AG04450 (cell line): ENCODE measurements at regions of chr3 and their contacts with region 1.

Region 1: GRCh38 chr3:179732661-179733348 is 80.0 kb downstream of the USP13 start:
- DNase-seq: no peak
- H3K4me3 ChIP-seq: no peak overlapping the region
- H3K27ac ChIP-seq: no peak overlapping the region
- H3K27me3 ChIP-seq: no peaks in the 10 kb centered on the region
- CTCF ChIP-seq: no peak

Region 2: GRCh38 chr3:179750720-179751328 is 18.0 kb after region 1 on chr3:
- CTCF ChIA-PET with region 1: interaction called, 15 read pairs
- POLR2A ChIA-PET with region 1: no interaction called
- DNase-seq: no peak
- H3K4me3 ChIP-seq: no peak overlapping the region
- H3K27ac ChIP-seq: no peak overlapping the region
- H3K27me3 ChIP-seq: no peaks in the 10 kb centered on the region
- CTCF ChIP-seq: peak; percentile 75